Endothelial cell of umbilical vein (primary cell): ENCODE measurements at regions of chr19 and their contacts with region 1.

Region 1: GRCh38 chr19:16382775-16383543 is 58.3 kb downstream of the KLF2 start:
- DNase-seq: peak; percentile 86
- H3K4me3 ChIP-seq: no peak overlapping the region
- H3K27ac ChIP-seq: peak overlapping the region; percentile 46
- H3K4me1 ChIP-seq: peaks cover 6% of the 10 kb centered on the region
- H3K27me3 ChIP-seq: no peaks in the 10 kb centered on the region
- CTCF ChIP-seq: peak; percentile 78 to 87
- POLR2A ChIP-seq: no peak

Region 2: DNA sequence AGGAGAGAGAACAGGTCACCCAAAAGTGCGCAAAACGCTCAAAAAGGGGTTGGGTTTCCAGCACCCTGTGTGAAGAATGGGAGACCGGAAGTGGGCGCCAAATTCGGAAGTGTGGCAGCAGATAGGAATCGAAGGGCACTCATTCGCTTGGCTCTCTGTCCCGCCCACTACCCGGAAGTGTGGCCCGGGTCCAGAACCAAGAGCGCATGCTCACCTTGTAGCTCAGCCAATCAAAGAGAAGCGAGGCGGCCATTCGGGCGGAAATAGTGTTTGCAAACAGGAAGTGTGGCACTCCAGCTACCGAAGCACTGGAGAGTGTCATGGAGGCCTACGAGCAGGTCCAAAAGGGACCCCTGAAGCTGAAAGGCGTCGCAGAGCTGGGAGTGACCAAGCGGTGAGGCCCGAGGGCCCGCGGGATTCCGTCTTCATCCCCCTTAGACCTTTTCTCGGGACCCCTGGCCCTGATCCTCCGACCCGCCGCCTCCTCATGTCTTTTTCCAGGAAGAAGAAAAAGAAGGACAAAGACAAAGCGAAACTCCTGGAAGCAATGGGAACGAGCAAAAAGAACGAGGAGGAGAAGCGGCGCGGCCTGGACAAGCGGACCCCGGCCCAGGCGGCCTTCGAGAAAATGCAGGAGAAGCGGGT is 197.7 kb before region 1 on chr19 and contains the start of gene FAM32A:
- CTCF ChIA-PET with region 1: interaction called, 15 read pairs
- POLR2A ChIA-PET with region 1: no interaction called
- dilution Hi-C with region 1: no loop called
- intact Hi-C with region 1: no loop called
- DNase-seq: peak; percentile 99
- H3K4me3 ChIP-seq: peak within 1 kb of the TSS; percentile 84 to 96 (median 84)
- H3K27ac ChIP-seq: peak within 1 kb of the TSS; percentile 76
- H3K4me1 ChIP-seq: peaks cover 10% of the 10 kb centered on the region
- H3K27me3 ChIP-seq: no peaks in the 10 kb centered on the region
- CTCF ChIP-seq: peak in 1 of 2 donors; percentile 14
- POLR2A ChIP-seq: peak; percentile 79
- total RNA-seq, gene FAM32A: 76.3 and 82.8 TPM in 2 replicates

Region 3: DNA sequence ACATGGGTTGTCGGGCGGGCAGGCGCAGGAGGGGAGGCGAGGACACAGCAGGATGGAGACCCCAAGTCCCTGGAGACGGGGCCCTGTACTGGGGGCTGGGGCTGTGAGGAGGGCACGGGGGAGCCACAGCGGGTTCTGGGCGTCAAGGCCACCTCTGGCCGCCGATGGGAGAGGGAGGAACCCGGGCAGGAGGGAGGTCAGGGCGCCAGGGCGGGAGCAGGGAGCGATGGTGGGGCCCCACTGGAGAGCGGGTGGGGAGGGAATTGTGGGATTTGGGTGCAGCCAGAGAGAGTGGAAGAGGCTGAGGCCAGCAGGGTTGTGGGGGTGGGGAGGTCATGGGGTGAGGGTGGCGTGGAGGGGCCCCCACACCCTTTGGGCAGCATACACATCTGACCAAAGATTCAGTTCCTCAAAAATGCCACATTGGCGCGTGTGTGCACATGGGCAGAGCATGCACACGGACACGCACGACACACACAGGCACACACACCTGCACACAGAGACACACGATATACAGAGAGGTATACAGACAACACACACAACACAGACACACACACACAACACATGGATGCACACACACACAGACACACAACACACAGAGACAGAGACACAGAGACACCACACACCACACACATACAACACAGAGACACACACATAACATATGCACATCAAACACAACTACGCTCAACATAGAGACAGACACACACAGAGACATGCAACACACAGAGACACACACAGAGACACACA is 130.3 kb before region 1 on chr19:
- CTCF ChIA-PET with region 1: interaction called, 186 read pairs
- POLR2A ChIA-PET with region 1: interaction called, 3 read pairs
- dilution Hi-C with region 1: no loop called
- intact Hi-C with region 1: loop called (anchors 1 kb)
- DNase-seq: no peak
- H3K4me3 ChIP-seq: no peak overlapping the region
- H3K27ac ChIP-seq: no peak overlapping the region
- H3K4me1 ChIP-seq: no peaks in the 10 kb centered on the region
- H3K27me3 ChIP-seq: no peaks in the 10 kb centered on the region
- CTCF ChIP-seq: no peak
- POLR2A ChIP-seq: no peak

Region 4: GRCh38 chr19:16324384-16325160 is 58.4 kb before region 1 on chr19 and contains the start of gene KLF2:
- CTCF ChIA-PET with region 1: interaction called, 99 read pairs
- POLR2A ChIA-PET with region 1: interaction called, 9 read pairs
- dilution Hi-C with region 1: no loop called
- intact Hi-C with region 1: loop called (anchors 1 kb)
- DNase-seq: peak; percentile 94
- H3K4me3 ChIP-seq: peak within 1 kb of the TSS; percentile 71 to 93 (median 90)
- H3K27ac ChIP-seq: peak within 1 kb of the TSS; percentile 79
- H3K4me1 ChIP-seq: peaks cover 29% of the 10 kb centered on the region
- H3K27me3 ChIP-seq: no peaks in the 10 kb centered on the region
- CTCF ChIP-seq: no peak
- POLR2A ChIP-seq: peak; percentile 99
- total RNA-seq, gene KLF2: 23.4 and 37.7 TPM in 2 replicates

Region 5: GRCh38 chr19:16361254-16361653 is 21.7 kb before region 1 on chr19:
- CTCF ChIA-PET with region 1: interaction called, 15 read pairs
- POLR2A ChIA-PET with region 1: interaction called, 3 read pairs
- dilution Hi-C with region 1: no loop called
- intact Hi-C with region 1: no loop called
- DNase-seq: no peak
- H3K4me3 ChIP-seq: no peak overlapping the region
- H3K27ac ChIP-seq: no peak overlapping the region
- H3K4me1 ChIP-seq: peaks cover 3% of the 10 kb centered on the region
- H3K27me3 ChIP-seq: no peaks in the 10 kb centered on the region
- CTCF ChIP-seq: no peak
- POLR2A ChIP-seq: no peak

Region 6: GRCh38 chr19:16417660-16418596 is 35.0 kb after region 1 on chr19:
- CTCF ChIA-PET with region 1: interaction called, 5 read pairs
- POLR2A ChIA-PET with region 1: no interaction called
- dilution Hi-C with region 1: no loop called
- intact Hi-C with region 1: loop called (anchors 1 kb)
- DNase-seq: peak; percentile 51
- H3K4me3 ChIP-seq: no peak overlapping the region
- H3K27ac ChIP-seq: no peak overlapping the region
- H3K4me1 ChIP-seq: peaks cover 14% of the 10 kb centered on the region
- H3K27me3 ChIP-seq: no peaks in the 10 kb centered on the region
- CTCF ChIP-seq: peak; percentile 87 to 95
- POLR2A ChIP-seq: no peak

Region 7: GRCh38 chr19:16528073-16528472 is 145.1 kb after region 1 on chr19:
- CTCF ChIA-PET with region 1: no interaction called
- POLR2A ChIA-PET with region 1: no interaction called
- dilution Hi-C with region 1: no loop called
- intact Hi-C with region 1: no loop called
- DNase-seq: peak; percentile 17
- H3K4me3 ChIP-seq: no peak overlapping the region
- H3K27ac ChIP-seq: no peak overlapping the region
- H3K4me1 ChIP-seq: no peaks in the 10 kb centered on the region
- H3K27me3 ChIP-seq: no peaks in the 10 kb centered on the region
- CTCF ChIP-seq: peak; percentile 52 to 53
- POLR2A ChIP-seq: no peak